H1 (cell line): ENCODE measurements at regions of chr1 and their contacts with region 1.

Region 1: GRCh38 chr1:24391882-24392603 is 21.5 kb downstream of the STPG1 start:
- DNase-seq: peak; percentile 70 to 88
- H3K4me3 ChIP-seq: no peak overlapping the region
- H3K27ac ChIP-seq: no peak overlapping the region
- H3K4me1 ChIP-seq: peaks cover 0 to 2% (median 0%) of the 10 kb centered on the region in 4 experiments; a peak in 4 of 7 replicates
- H3K27me3 ChIP-seq: no peaks in the 10 kb centered on the region
- CTCF ChIP-seq: peak; percentile 90 to 92 (median 92)
- EP300 ChIP-seq: no peak
- POLR2A ChIP-seq: no peak
- RAD21 ChIP-seq: peak; percentile 92 to 97

Region 2: DNA sequence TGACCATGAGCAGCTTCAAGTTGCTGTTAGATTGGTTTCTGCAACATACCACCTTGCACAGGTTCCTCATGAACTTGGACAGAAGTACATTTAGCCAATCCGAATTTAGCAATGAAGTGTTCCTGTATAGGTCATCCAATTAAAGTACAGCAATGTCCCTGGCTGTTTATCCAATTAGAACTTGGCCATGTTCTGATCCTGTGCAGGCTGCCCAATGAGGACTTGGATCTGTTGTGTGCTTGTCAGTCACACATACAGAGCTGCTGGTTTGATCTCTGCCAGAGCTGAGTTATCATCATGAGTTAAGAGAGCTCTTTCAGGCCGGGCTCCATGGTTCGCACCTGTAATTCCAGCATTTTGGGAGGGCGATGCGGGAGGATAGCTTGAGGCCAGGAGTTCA is 183.0 kb before region 1 on chr1:
- CTCF ChIA-PET with region 1: interaction called, 81 read pairs
- POLR2A ChIA-PET with region 1: no interaction called
- DNase-seq: no peak
- H3K4me3 ChIP-seq: no peak overlapping the region
- H3K27ac ChIP-seq: no peak overlapping the region
- H3K4me1 ChIP-seq: peaks cover 0 to 4% (median 0%) of the 10 kb centered on the region in 4 experiments; a peak in 1 of 7 replicates
- H3K27me3 ChIP-seq: no peaks in the 10 kb centered on the region
- CTCF ChIP-seq: no peak
- EP300 ChIP-seq: no peak
- POLR2A ChIP-seq: no peak
- RAD21 ChIP-seq: no peak

Region 3: DNA sequence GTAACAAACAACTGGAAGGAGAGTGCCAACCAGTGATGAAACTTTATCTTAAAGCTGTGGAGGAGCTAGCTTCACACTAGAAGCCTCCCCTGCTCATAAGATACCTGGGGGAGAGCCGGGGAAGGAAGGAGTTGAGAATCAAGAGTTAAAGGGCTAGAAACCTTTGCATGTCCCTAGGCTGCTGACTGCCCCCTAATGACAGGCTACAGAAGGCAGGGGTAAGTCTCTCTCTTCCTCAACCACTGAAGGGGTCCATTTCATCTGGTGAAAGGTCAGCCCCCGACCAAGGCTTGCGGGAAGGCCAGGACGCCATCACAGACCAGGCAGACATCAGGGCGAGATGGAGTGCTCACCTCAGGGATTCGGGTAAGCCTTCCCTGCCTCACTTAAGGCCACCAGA is 138.5 kb before region 1 on chr1:
- CTCF ChIA-PET with region 1: interaction called, 15 read pairs
- POLR2A ChIA-PET with region 1: no interaction called
- DNase-seq: peak in 1 of 2 experiments; percentile 51
- H3K4me3 ChIP-seq: no peak overlapping the region
- H3K27ac ChIP-seq: no peak overlapping the region
- H3K4me1 ChIP-seq: no peaks in the 10 kb centered on the region; a peak in 1 of 7 replicates
- H3K27me3 ChIP-seq: no peaks in the 10 kb centered on the region
- CTCF ChIP-seq: peak; percentile 47 to 67 (median 57)
- EP300 ChIP-seq: no peak
- POLR2A ChIP-seq: no peak
- RAD21 ChIP-seq: peak; percentile 46 to 62

Region 4: GRCh38 chr1:24301785-24302175 is 90.3 kb before region 1 on chr1:
- CTCF ChIA-PET with region 1: interaction called, 34 read pairs
- POLR2A ChIA-PET with region 1: no interaction called
- DNase-seq: no peak
- H3K4me3 ChIP-seq: no peak overlapping the region
- H3K27ac ChIP-seq: no peak overlapping the region
- H3K4me1 ChIP-seq: peaks cover 0 to 10% (median 5%) of the 10 kb centered on the region in 4 experiments; a peak in 3 of 7 replicates
- H3K27me3 ChIP-seq: no peaks in the 10 kb centered on the region
- CTCF ChIP-seq: no peak
- EP300 ChIP-seq: no peak
- POLR2A ChIP-seq: no peak
- RAD21 ChIP-seq: no peak

Region 5: GRCh38 chr1:24351918-24352627 is 40.0 kb before region 1 on chr1:
- CTCF ChIA-PET with region 1: interaction called, 13 read pairs
- POLR2A ChIA-PET with region 1: no interaction called
- DNase-seq: no peak
- H3K4me3 ChIP-seq: no peak overlapping the region
- H3K27ac ChIP-seq: no peak overlapping the region
- H3K4me1 ChIP-seq: no peaks in the 10 kb centered on the region
- H3K27me3 ChIP-seq: 0 out of 7 replicates have a peak, but pooled peaks cover 0 to 2% (median 0%) of the 10 kb centered on the region in 4 experiments
- CTCF ChIP-seq: no peak
- EP300 ChIP-seq: no peak
- POLR2A ChIP-seq: no peak
- RAD21 ChIP-seq: no peak

Region 6: GRCh38 chr1:24508911-24509310 is 116.9 kb after region 1 on chr1:
- CTCF ChIA-PET with region 1: no interaction called
- POLR2A ChIA-PET with region 1: no interaction called
- DNase-seq: no peak
- H3K4me3 ChIP-seq: no peak overlapping the region
- H3K27ac ChIP-seq: no peak overlapping the region
- H3K4me1 ChIP-seq: peaks cover 0 to 15% (median 8%) of the 10 kb centered on the region in 4 experiments; a peak in 5 of 7 replicates
- H3K27me3 ChIP-seq: no peaks in the 10 kb centered on the region
- CTCF ChIP-seq: no peak
- EP300 ChIP-seq: no peak
- POLR2A ChIP-seq: no peak
- RAD21 ChIP-seq: no peak

Region 7: GRCh38 chr1:24594154-24594553 is 202.1 kb after region 1 on chr1:
- CTCF ChIA-PET with region 1: interaction called, 10 read pairs
- POLR2A ChIA-PET with region 1: no interaction called
- DNase-seq: no peak
- H3K4me3 ChIP-seq: no peak overlapping the region
- H3K27ac ChIP-seq: no peak overlapping the region
- H3K4me1 ChIP-seq: no peaks in the 10 kb centered on the region
- H3K27me3 ChIP-seq: no peaks in the 10 kb centered on the region
- CTCF ChIP-seq: no peak
- EP300 ChIP-seq: no peak
- POLR2A ChIP-seq: no peak
- RAD21 ChIP-seq: no peak

Region 8: GRCh38 chr1:24688621-24689195 is 296.7 kb after region 1 on chr1:
- CTCF ChIA-PET with region 1: no interaction called
- POLR2A ChIA-PET with region 1: no interaction called
- DNase-seq: peak; percentile 63 to 85
- H3K4me3 ChIP-seq: no peak overlapping the region; a peak in 1 of 8 replicates
- H3K27ac ChIP-seq: no peak overlapping the region
- H3K4me1 ChIP-seq: peaks cover 0 to 2% (median 1%) of the 10 kb centered on the region in 4 experiments; a peak in 2 of 7 replicates
- H3K27me3 ChIP-seq: no peaks in the 10 kb centered on the region
- CTCF ChIP-seq: peak; percentile 82 to 94 (median 93)
- EP300 ChIP-seq: no peak
- POLR2A ChIP-seq: no peak
- RAD21 ChIP-seq: peak; percentile 97